ENCODE measurements at regions of chr3 and their contacts with region 1.

Region 1: GRCh38 chr3:106862067-106862466 is 515.2 kb upstream of the CCDC54 start:
- DNase-seq: no peak
- ATAC-seq: no peak

Region 2: GRCh38 chr3:106333911-106334618 is 528.0 kb before region 1 on chr3:
- intact Hi-C with region 1: loop called (anchors 10 kb)
- DNase-seq: no peak
- ATAC-seq: no peak

Region 3: GRCh38 chr3:107013641-107014040 is 151.6 kb after region 1 on chr3:
- intact Hi-C with region 1: no loop called
- DNase-seq: no peak
- ATAC-seq: no peak

Measured in left ventricle myocardium superior (tissue), 1 donor.